Activated T-helper 1 cell treated with anti-CD3 and anti-CD28 coated beads, Interleukin-12 subunit alpha, Interleukin-12 subunit beta, Interleukin-2, Interleukin-4 antibody, amounts not matched to agents 30 ng/mL and 10 ng/mL and 1 ng/mL, durations not matched to agents 14 hours and 24 hours and 36 hours (primary cell): ENCODE measurements at regions of chr15 and their contacts with region 1.

Region 1: GRCh38 chr15:71800835-71801745 is 9.3 kb upstream of the NR2E3 start:
- DNase-seq: no peak
- H3K4me3 Mint-ChIP-seq: no peak overlapping the region
- H3K27ac Mint-ChIP-seq: no peak overlapping the region
- H3K4me1 Mint-ChIP-seq: no peaks in the 10 kb centered on the region
- H3K27me3 Mint-ChIP-seq: no peaks in the 10 kb centered on the region

Region 2: DNA sequence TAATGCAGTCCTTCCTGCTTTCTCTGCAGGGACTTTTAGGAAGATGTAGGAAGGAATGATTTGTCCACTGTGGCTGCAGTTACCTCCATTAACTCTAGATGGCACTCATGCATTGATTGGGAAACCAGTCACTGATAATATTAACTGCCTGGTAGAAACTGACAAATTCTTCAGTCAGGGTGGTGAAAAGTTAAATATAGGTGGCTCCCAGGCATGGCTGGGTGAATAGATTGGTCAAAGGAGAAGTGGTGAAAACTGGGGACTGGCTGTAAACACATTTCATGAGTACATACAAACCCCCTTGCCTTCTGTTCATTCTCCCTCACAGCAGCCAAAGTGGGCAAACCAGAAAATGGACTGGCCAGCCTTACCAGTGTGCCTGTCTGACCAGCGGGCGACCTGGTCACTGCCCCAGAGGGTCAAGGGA is 352.4 kb before region 1 on chr15:
- intact Hi-C with region 1: loop called (anchors 2 kb)
- DNase-seq: no peak
- H3K4me3 Mint-ChIP-seq: no peak overlapping the region
- H3K27ac Mint-ChIP-seq: no peak overlapping the region
- H3K4me1 Mint-ChIP-seq: no peaks in the 10 kb centered on the region
- H3K27me3 Mint-ChIP-seq: peaks cover 2% of the 10 kb centered on the region

Region 3: DNA sequence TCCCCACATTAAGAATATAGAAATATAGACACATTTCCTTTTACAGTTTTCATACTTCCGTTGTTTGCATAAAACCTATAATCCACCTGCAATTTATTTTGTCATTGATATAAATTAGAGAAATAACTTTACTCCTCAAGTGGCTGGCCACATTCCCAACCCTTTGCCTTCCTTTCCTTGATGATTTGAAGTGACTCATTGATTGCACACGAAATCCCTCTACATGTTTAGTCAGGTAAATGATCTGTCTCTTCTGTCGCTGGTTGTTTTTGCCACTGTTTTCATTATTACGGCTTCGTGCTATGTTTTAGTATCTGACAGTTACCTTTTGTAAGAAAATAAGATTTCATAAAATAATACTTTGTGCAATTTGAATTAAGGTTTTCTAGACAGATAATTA is 262.9 kb before region 1 on chr15:
- intact Hi-C with region 1: no loop called
- DNase-seq: no peak
- H3K4me3 Mint-ChIP-seq: no peak overlapping the region
- H3K27ac Mint-ChIP-seq: no peak overlapping the region
- H3K4me1 Mint-ChIP-seq: no peaks in the 10 kb centered on the region
- H3K27me3 Mint-ChIP-seq: peaks cover 3% of the 10 kb centered on the region

Region 4: DNA sequence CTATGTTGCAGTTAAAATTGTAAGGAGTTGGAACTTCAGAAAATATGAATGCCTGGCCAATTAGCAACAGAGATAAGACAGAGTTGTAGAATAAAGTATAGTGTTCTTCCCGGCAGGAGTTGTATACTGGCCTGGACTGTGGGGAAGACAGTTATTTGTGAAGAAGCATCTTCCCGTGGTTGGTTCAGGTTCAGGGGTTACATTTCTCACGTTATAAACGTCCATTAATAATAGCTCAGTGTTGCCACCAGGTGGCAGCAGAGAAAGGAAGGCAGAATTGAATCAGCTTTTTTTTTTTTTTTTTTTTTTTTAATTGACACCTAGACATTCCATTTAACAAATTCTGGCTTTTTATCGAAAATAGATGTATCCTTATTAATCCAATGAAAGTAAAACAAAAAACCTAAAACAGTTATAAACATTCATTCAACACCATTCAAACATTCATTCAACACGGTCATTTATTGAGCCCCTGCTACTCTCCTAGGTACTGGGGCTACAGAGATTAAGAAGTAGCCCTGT is 57.2 kb before region 1 on chr15:
- intact Hi-C with region 1: loop called (anchors 1 kb)
- DNase-seq: peak; percentile 11
- H3K4me3 Mint-ChIP-seq: no peak overlapping the region
- H3K27ac Mint-ChIP-seq: no peak overlapping the region
- H3K4me1 Mint-ChIP-seq: no peaks in the 10 kb centered on the region
- H3K27me3 Mint-ChIP-seq: peaks cover 5% of the 10 kb centered on the region